ENCODE measurements at regions of chr19 and their contacts with region 1.

Region 1: GRCh38 chr19:30682999-30683536 is 310.9 kb downstream of the ZNF536 start:
- DNase-seq: peak; percentile 64
- H3K4me3 Mint-ChIP-seq: no peak overlapping the region
- H3K27ac Mint-ChIP-seq: no peak overlapping the region
- H3K4me1 Mint-ChIP-seq: no peaks in the 10 kb centered on the region
- H3K27me3 Mint-ChIP-seq: peaks cover 20% of the 10 kb centered on the region

Region 2: GRCh38 chr19:30669329-30670010 is 13.6 kb before region 1 on chr19:
- CTCF ChIA-PET with region 1: interaction called, 18 read pairs
- DNase-seq: peak; percentile 59
- H3K4me3 Mint-ChIP-seq: no peak overlapping the region
- H3K27ac Mint-ChIP-seq: no peak overlapping the region
- H3K4me1 Mint-ChIP-seq: no peaks in the 10 kb centered on the region
- H3K27me3 Mint-ChIP-seq: peaks cover 19% of the 10 kb centered on the region

Region 3: DNA sequence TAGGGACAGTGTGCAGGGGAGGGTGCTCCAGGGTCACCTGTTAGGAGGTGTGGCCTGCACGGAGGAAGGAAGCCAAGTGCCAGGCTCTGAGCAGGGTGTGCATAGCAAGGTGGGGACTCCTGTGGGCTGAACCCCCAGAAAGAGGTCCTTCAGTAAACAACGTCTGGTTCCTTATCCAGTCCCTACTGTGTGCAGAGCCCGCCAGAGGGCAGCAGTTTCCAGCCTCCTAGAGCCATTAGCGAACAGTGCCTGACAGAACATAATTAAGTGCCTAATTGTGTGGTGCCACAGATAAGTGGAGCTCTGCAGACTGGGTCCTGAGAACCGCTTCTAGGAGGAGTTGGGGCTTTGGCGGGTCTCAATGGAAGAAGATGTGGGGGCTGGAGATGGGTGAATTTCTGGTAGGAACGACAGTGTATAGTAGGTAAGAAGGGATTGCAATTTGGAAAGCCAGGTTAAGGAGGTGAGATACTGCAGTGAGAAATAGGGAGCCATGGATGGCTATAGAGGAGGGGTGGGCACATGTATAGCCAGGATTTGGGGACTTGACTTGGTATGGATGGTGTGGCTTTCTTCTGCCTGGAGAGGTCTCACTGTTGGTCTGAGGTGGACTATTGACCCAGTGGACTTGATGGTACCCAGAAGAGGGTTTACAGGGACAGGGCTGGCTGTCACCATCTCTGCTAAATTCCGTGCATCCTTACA is 12.3 kb after region 1 on chr19:
- CTCF ChIA-PET with region 1: interaction called, 10 read pairs
- DNase-seq: no peak
- H3K4me3 Mint-ChIP-seq: no peak overlapping the region
- H3K27ac Mint-ChIP-seq: no peak overlapping the region
- H3K4me1 Mint-ChIP-seq: no peaks in the 10 kb centered on the region
- H3K27me3 Mint-ChIP-seq: peaks cover 49% of the 10 kb centered on the region

Region 4: DNA sequence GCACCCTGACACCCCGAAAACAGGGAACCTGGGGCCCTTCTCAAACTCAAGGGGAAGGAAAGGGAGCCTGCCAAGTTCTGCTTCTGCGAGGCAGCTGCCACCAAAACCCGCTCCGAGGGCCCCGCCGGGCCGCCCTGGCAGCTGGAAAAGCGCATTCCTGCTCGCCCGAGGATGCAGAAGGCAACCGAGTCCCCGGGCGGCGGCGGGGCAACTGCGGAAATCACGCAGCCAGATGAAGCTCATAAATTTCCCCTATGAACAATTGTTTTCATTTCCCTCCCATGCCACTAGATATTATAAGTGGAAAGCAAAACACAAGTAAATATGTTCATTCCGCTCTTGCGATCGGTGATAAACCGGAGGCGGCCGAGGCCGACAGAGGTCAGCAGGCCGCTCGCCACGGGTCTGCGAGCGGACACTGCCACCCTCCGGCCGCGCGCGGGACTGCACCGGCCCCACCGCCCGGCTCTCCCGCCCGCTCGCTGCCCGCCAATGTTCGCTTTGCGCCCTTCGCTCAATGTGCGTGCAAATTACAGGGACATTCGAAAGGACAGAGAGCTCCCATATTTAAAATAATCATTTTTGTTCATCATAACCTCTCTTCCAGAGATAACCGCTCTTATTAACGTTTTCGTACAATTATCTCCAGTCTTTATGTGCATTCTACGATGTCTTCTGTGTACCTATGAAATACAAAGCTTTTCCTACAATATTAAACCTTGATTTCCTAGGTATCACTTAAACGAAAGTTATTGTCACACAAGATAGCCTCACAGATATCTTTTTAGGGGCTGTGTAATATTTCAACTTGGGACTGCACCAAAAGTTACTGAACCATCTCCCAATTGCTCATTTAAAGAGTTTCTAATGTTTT is 1541.5 kb after region 1 on chr19:
- CTCF ChIA-PET with region 1: interaction called, 12 read pairs
- DNase-seq: peak; percentile 63
- H3K4me3 Mint-ChIP-seq: no peak overlapping the region
- H3K27ac Mint-ChIP-seq: no peak overlapping the region
- H3K4me1 Mint-ChIP-seq: peaks cover 12% of the 10 kb centered on the region
- H3K27me3 Mint-ChIP-seq: peaks cover 38% of the 10 kb centered on the region